Calu3 (cell line): ENCODE measurements at regions of chr14 and their contacts with region 1.

Region 1: GRCh38 chr14:59632381-59632780 is 55.8 kb upstream of the CCDC175 start:
- DNase-seq: peak; percentile 32
- H3K4me3 Mint-ChIP-seq: no peak overlapping the region
- H3K27ac Mint-ChIP-seq: no peak overlapping the region
- H3K4me1 Mint-ChIP-seq: no peaks in the 10 kb centered on the region
- H3K27me3 Mint-ChIP-seq: peaks cover 60% of the 10 kb centered on the region
- CTCF ChIP-seq: peak; percentile 47

Region 2: DNA sequence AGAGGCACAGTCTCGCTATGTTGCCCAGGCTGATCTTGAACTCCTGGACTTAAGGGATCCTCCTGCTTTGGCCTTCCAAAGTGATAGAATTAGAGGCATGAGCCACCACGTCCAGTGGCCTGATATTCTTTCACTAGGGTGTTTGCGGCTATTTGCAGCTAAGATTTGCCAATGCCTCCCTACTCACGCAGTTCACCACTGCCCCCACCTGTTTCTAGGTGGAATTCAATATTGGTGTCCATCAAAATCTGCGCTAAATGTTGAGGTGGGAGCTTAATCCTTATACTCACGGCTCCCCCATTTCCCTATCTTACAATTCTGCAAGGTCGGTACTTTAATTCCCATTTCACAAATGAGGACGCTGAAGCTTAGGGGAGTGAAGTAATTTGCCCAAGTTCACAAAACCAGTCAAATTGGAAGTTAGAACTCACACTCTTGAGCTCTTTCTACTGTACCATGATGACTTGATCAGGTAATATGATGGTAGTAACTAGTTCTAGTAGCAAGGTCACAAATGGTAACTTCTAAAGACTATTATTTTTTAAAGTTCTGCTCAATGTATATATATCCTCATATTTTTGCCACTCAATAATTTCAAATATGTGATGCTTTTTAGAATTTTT is 265.5 kb after region 1 on chr14:
- CTCF ChIA-PET with region 1: interaction called, 7 read pairs
- intact Hi-C with region 1: loop called (anchors 1 kb)
- DNase-seq: peak; percentile 42
- H3K4me3 Mint-ChIP-seq: no peak overlapping the region
- H3K27ac Mint-ChIP-seq: no peak overlapping the region
- H3K4me1 Mint-ChIP-seq: no peaks in the 10 kb centered on the region
- H3K27me3 Mint-ChIP-seq: peaks cover 9% of the 10 kb centered on the region
- CTCF ChIP-seq: peak; percentile 21

Region 3: GRCh38 chr14:59918824-59919569 is 286.6 kb after region 1 on chr14:
- CTCF ChIA-PET with region 1: no interaction called
- intact Hi-C with region 1: loop called (anchors 1 kb)
- DNase-seq: no peak
- H3K4me3 Mint-ChIP-seq: peak overlapping the region; percentile 61
- H3K27ac Mint-ChIP-seq: no peak overlapping the region
- H3K4me1 Mint-ChIP-seq: no peaks in the 10 kb centered on the region
- H3K27me3 Mint-ChIP-seq: peaks cover 52% of the 10 kb centered on the region
- CTCF ChIP-seq: no peak

Region 4: GRCh38 chr14:60184146-60184904 is 551.9 kb after region 1 on chr14:
- CTCF ChIA-PET with region 1: no interaction called
- intact Hi-C with region 1: loop called (anchors 5 kb)
- DNase-seq: peak; percentile 36
- H3K4me3 Mint-ChIP-seq: no peak overlapping the region
- H3K27ac Mint-ChIP-seq: no peak overlapping the region
- H3K4me1 Mint-ChIP-seq: no peaks in the 10 kb centered on the region
- H3K27me3 Mint-ChIP-seq: no peaks in the 10 kb centered on the region
- CTCF ChIP-seq: peak; percentile 29

Region 5: DNA sequence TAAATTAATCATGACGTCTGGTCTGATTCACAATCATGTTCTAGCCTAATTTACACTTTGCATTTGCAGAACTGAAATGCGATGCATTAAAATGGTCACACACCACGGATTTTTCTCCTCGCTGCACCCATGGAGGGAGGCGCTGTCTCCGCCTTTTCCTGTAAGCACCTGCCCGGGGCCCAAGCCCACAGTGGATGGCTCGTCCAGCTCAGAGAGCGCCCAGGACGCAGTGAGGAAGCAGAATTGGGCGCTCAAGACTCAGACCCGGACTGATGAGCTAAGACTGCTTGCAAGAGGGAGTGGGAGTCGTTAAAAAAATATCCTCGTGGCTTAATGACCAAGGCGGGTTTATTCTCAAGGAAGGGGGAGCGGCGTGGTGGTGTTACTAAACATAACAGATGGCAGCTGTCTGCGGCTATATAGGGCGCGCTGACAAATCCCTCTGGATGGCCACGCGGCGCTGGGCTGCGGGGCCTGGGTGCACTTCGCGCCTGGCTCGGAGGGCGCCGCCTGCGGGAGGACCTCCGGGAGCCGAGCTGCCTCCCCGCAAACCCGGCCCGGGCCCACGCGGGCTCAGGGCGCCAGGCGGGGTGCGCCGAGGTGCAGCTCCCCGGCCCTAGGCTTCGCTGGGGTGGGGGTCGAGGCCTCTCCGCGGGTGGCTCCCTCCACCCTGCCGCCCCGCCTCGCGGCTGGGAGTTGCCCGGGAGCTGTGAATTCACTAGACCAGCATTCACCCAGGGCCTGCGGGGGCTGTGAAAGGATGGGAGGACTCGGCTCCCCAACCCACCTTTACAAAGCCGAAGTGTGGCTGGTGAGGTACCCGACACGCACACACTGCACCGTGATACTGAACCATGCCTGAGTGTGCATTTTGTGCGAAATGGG is 695.3 kb after region 1 on chr14:
- CTCF ChIA-PET with region 1: no interaction called
- intact Hi-C with region 1: no loop called
- DNase-seq: peak; percentile 57
- H3K4me3 Mint-ChIP-seq: peak overlapping the region; percentile 77
- H3K27ac Mint-ChIP-seq: no peak overlapping the region
- H3K4me1 Mint-ChIP-seq: peaks cover 20% of the 10 kb centered on the region
- H3K27me3 Mint-ChIP-seq: peaks cover under 1% of the 10 kb centered on the region
- CTCF ChIP-seq: no peak